ENCODE measurements at regions of chr17 and their contacts with region 1.

Region 1: GRCh38 chr17:30104575-30105339 is 11.9 kb upstream of the NSRP1 start:
- DNase-seq: peak; percentile 51 to 76 (median 55)
- H3K4me3 ChIP-seq: peak overlapping the region; percentile 66
- H3K4me3 Mint-ChIP-seq: peak overlapping the region; percentile 60 to 91 (median 87)
- H3K27ac ChIP-seq: no peak overlapping the region
- H3K27ac Mint-ChIP-seq: peak overlapping the region in 6 of 8 donors; percentile 5 to 88 (median 60)
- H3K4me1 ChIP-seq: peaks cover 10% of the 10 kb centered on the region
- H3K4me1 Mint-ChIP-seq: peaks cover 6 to 10% (median 6%) of the 10 kb centered on the region in 3 donors
- H3K27me3 ChIP-seq: no peaks in the 10 kb centered on the region
- H3K27me3 Mint-ChIP-seq: peaks cover 2 to 5% of the 10 kb centered on the region in 2 donors

Region 2: GRCh38 chr17:30068465-30068864 is 36.3 kb before region 1 on chr17:
- CTCF ChIA-PET with region 1: no interaction called
- POLR2A ChIA-PET with region 1: no interaction called
- DNase-seq: no peak
- H3K4me3 ChIP-seq: no peak overlapping the region
- H3K4me3 Mint-ChIP-seq: no peak overlapping the region
- H3K27ac ChIP-seq: no peak overlapping the region
- H3K27ac Mint-ChIP-seq: no peak overlapping the region
- H3K4me1 ChIP-seq: no peaks in the 10 kb centered on the region
- H3K4me1 Mint-ChIP-seq: no peaks in the 10 kb centered on the region
- H3K27me3 ChIP-seq: no peaks in the 10 kb centered on the region
- H3K27me3 Mint-ChIP-seq: peaks cover 27 to 43% of the 10 kb centered on the region in 2 donors

Region 3: GRCh38 chr17:30093463-30094147 is 11.2 kb before region 1 on chr17:
- CTCF ChIA-PET with region 1: interaction called, 39 read pairs
- POLR2A ChIA-PET with region 1: no interaction called
- DNase-seq: peak; percentile 8 to 53 (median 42)
- H3K4me3 ChIP-seq: no peak overlapping the region
- H3K4me3 Mint-ChIP-seq: peak overlapping the region in 1 of 7 donors; percentile 1
- H3K27ac ChIP-seq: no peak overlapping the region
- H3K27ac Mint-ChIP-seq: no peak overlapping the region
- H3K4me1 ChIP-seq: peaks cover 7% of the 10 kb centered on the region
- H3K4me1 Mint-ChIP-seq: peaks cover 6 to 9% (median 6%) of the 10 kb centered on the region in 3 donors
- H3K27me3 ChIP-seq: no peaks in the 10 kb centered on the region
- H3K27me3 Mint-ChIP-seq: peaks cover 14 to 39% of the 10 kb centered on the region in 2 donors

Region 4: GRCh38 chr17:30116661-30117551 is 12.1 kb after region 1 on chr17 and contains the start of gene NSRP1:
- CTCF ChIA-PET with region 1: interaction called, 34 read pairs
- POLR2A ChIA-PET with region 1: interaction called, 6 read pairs
- DNase-seq: peak; percentile 85 to 94 (median 87)
- H3K4me3 ChIP-seq: peak within 1 kb of the TSS; percentile 98
- H3K4me3 Mint-ChIP-seq: peak within 1 kb of the TSS; percentile 96 to 99 (median 98)
- H3K27ac ChIP-seq: peak within 1 kb of the TSS; percentile 99
- H3K27ac Mint-ChIP-seq: peak within 1 kb of the TSS; percentile 94 to 100 (median 98)
- H3K4me1 ChIP-seq: peaks cover 20% of the 10 kb centered on the region
- H3K4me1 Mint-ChIP-seq: peaks cover 41 to 53% (median 50%) of the 10 kb centered on the region in 3 donors
- H3K27me3 ChIP-seq: no peaks in the 10 kb centered on the region
- H3K27me3 Mint-ChIP-seq: peaks cover 0 to 1% of the 10 kb centered on the region in 2 donors
- total RNA-seq, gene NSRP1: 26.8 to 27.9 TPM

Region 5: GRCh38 chr17:30124273-30124796 is 19.6 kb after region 1 on chr17:
- CTCF ChIA-PET with region 1: interaction called, 31 read pairs
- POLR2A ChIA-PET with region 1: no interaction called
- DNase-seq: no peak
- H3K4me3 ChIP-seq: no peak overlapping the region
- H3K4me3 Mint-ChIP-seq: no peak overlapping the region
- H3K27ac ChIP-seq: no peak overlapping the region
- H3K27ac Mint-ChIP-seq: peak overlapping the region in 5 of 8 donors; percentile 0 to 86 (median 32)
- H3K4me1 ChIP-seq: peaks cover 7% of the 10 kb centered on the region
- H3K4me1 Mint-ChIP-seq: peaks cover 37 to 59% (median 56%) of the 10 kb centered on the region in 3 donors
- H3K27me3 ChIP-seq: no peaks in the 10 kb centered on the region
- H3K27me3 Mint-ChIP-seq: peaks cover 0 to 1% of the 10 kb centered on the region in 2 donors